ENCODE measurements at regions of chr5 and their contacts with region 1.

Region 1: DNA sequence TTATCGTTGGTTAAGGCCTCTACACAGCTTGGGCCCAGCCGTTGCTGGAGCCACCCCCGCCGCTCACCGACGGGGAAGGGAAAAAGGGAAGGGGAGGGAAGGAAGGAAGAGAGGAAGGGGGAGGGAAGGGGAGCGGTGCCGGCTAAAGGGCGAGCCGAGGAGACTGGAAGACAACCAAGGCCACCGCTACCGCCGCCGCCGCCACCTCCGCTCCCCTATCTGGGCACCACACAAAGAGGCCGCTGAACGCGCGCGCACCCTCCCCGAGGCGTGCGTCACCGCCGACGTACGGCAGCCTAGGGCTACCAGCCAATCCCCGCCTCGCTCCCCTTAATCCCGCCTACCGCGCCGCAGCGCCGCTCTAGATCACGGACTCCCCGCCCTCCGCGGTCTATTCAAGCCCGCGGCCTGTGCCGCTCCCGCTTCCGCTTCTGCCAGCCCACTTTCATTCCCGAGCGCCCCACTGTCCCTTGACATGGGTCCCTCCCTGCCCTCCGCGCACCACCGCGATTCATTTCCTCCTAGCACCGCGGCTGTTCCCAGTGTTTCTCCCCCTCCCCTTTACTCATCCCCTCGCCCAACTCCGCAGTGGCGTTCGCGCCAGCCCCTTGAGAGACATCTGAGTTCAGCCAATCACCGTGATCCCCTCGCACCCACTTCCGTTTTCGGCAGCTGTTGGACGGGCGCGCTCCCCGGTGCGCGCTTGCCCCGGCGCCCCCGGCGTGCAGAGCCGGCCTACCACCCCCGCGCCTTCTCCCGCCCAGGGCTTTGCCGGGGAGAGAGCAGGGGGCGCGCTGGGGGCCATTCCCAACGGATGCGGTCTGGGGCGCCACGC is at the start of gene HNRNPA0:
- DNase-seq: peak; percentile 97
- H3K4me3 ChIP-seq: peak within 1 kb of the TSS; percentile 91
- H3K27ac ChIP-seq: peak within 1 kb of the TSS; percentile 100
- H3K4me1 ChIP-seq: peaks cover 13% of the 10 kb centered on the region
- H3K27me3 ChIP-seq: peaks cover 6% of the 10 kb centered on the region
- CTCF ChIP-seq: no peak
- total RNA-seq, gene HNRNPA0: 56.0 and 56.2 TPM in 2 replicates

Region 2: GRCh38 chr5:136364307-136364706 is 1390.0 kb before region 1 on chr5:
- CTCF ChIA-PET with region 1: interaction called, 11 read pairs
- POLR2A ChIA-PET with region 1: no interaction called
- intact Hi-C with region 1: no loop called
- DNase-seq: peak; percentile 3
- H3K4me3 ChIP-seq: no peak overlapping the region
- H3K27ac ChIP-seq: no peak overlapping the region
- H3K4me1 ChIP-seq: no peaks in the 10 kb centered on the region
- H3K27me3 ChIP-seq: peaks cover 30% of the 10 kb centered on the region
- CTCF ChIP-seq: peak; percentile 54

Region 3: DNA sequence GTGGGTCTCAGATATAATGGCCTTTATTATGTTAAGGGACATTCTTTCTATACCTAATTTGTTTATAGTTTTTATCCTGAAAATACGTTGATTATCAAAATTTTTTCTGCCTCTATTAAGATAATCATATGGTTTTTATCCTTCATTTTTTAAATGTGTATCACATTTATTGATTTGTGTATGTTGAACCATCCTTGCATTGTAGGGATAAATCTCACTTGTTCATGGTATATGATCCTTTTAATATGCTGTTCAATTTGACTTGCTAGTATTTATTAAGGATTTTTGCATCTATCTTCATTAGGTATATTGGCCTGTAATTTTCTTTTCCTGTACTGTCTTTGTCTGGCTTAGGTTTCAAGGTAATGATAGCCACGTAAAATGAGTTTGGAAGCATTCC is 160.4 kb after region 1 on chr5:
- CTCF ChIA-PET with region 1: no interaction called
- POLR2A ChIA-PET with region 1: no interaction called
- intact Hi-C with region 1: no loop called
- DNase-seq: no peak
- H3K4me3 ChIP-seq: no peak overlapping the region
- H3K27ac ChIP-seq: no peak overlapping the region
- H3K4me1 ChIP-seq: no peaks in the 10 kb centered on the region
- H3K27me3 ChIP-seq: no peaks in the 10 kb centered on the region
- CTCF ChIP-seq: no peak

Region 4: GRCh38 chr5:138035605-138036537 is 281.5 kb after region 1 on chr5:
- CTCF ChIA-PET with region 1: no interaction called
- POLR2A ChIA-PET with region 1: no interaction called
- intact Hi-C with region 1: loop called (anchors 10 kb)
- DNase-seq: peak; percentile 93
- H3K4me3 ChIP-seq: no peak overlapping the region
- H3K27ac ChIP-seq: no peak overlapping the region
- H3K4me1 ChIP-seq: peaks cover 6% of the 10 kb centered on the region
- H3K27me3 ChIP-seq: no peaks in the 10 kb centered on the region
- CTCF ChIP-seq: peak; percentile 94